Activated CD4-positive, alpha-beta T cell treated with anti-CD3 and anti-CD28 coated beads, Interleukin-2, amount 10 ng/mL, durations not matched to agents 7 days and 5 days (primary cell): ENCODE measurements at regions of chr17 and their contacts with region 1.

Region 1: DNA sequence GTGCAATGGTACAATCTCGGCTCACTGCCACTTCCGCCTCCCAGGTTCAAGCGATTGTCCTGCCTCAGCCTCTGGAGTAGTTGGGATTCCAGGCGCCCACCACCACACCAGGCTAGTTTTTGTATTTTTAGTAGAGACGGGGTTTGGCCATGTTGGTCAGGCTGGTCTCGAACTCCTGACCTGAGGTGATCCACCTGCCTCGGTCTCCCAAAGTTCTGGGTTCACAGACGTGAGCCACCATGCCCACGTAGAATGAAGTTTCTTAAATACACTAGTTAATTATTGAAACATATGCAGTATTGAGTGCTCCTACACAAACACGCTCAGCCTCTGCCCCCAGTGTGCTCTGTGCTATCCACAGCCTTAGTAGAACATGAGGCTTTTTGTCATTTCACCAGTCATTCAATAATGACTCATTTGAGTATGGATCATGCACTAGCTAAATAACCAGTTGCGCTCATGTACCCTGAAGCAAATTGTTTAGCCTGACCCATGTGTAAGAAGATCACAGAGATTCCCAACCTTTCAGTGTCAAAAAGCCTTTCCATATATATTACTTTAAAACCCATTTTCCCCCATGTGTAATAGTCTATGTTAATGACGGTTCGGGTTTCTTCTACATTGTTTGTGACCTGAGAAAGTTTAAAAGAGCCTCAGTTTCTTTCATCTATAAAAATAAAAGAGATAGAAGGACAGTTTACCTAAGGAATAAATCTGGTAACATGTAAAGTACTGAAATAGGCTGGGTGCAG is 49.7 kb downstream of the TUBD1 start:
- DNase-seq: no peak
- H3K4me3 Mint-ChIP-seq: peak overlapping the region; percentile 93
- H3K27ac Mint-ChIP-seq: peak overlapping the region; percentile 98
- H3K4me1 Mint-ChIP-seq: peaks cover 60% of the 10 kb centered on the region
- H3K27me3 Mint-ChIP-seq: no peaks in the 10 kb centered on the region

Region 2: GRCh38 chr17:59829217-59830006 is 13.7 kb before region 1 on chr17:
- CTCF ChIA-PET with region 1: interaction called, 9 read pairs
- POLR2A ChIA-PET with region 1: interaction called, 47 read pairs
- DNase-seq: peak; percentile 59
- H3K4me3 Mint-ChIP-seq: peak overlapping the region; percentile 71
- H3K27ac Mint-ChIP-seq: peak overlapping the region; percentile 96
- H3K4me1 Mint-ChIP-seq: peaks cover 83% of the 10 kb centered on the region
- H3K27me3 Mint-ChIP-seq: no peaks in the 10 kb centered on the region